ENCODE measurements at regions of chr19 and their contacts with region 1.

Region 1: GRCh38 chr19:40716655-40717324 is at the starts of genes COQ8B and ITPKC:
- DNase-seq: peak; percentile 100
- ATAC-seq: peak; percentile 79
- total RNA-seq, gene COQ8B: 37.4 TPM
- total RNA-seq, gene ITPKC: 12.6 TPM

Region 2: DNA sequence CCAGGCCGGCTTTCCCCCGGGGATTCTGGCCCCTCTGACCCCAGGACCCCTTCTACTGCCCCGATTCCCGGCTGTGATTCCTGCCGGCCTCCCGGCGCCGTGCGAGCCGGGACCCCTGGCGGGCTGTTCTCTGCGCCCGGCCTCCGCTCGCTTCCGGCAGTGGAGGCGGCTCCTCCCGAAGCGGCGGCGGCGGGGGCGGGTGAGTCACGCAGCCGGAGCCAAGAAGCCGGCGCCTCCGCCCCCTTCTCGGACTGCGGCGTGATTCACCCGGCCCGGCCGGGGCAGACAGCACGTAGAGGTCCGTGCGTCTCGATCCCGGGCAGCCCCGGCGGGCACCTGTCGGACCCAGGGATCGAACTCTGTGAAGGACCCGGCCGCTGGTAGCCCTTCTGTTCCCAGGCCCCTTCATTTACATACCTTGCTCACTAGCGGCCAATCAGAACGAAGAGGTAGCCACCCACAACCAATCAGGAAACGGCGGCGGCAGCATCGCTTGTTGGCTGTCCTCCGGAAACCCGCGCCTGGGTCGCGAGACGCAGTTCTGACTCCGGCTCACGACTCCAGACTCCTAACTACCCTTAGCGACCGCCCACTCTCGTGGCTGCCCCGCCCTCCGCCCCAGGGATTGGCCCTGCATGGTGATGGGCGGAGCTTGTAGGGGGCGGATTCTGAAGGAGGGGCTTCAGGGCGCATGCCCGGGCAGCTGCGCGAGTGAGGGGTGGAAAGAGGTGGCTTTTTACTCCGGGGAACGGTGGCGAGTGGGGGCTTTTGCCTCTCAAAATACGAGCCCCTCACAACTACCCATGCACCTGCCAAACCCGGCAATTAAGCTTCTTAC is 291.1 kb before region 1 on chr19 and contains the start of gene SERTAD1:
- intact Hi-C with region 1: loop called (anchors 10 kb)
- DNase-seq: peak; percentile 100
- ATAC-seq: peak; percentile 94
- total RNA-seq, gene SERTAD1: 12.0 TPM

Region 3: GRCh38 chr19:40603389-40604135 is 113.2 kb before region 1 on chr19:
- intact Hi-C with region 1: loop called (anchors 5 kb)
- DNase-seq: peak; percentile 98
- ATAC-seq: peak; percentile 82

Region 4: GRCh38 chr19:40662921-40663694 is 53.7 kb before region 1 on chr19:
- intact Hi-C with region 1: loop called (anchors 2 kb)
- DNase-seq: peak; percentile 95
- ATAC-seq: peak; percentile 88

Region 5: GRCh38 chr19:40690693-40691420 is 25.9 kb before region 1 on chr19:
- intact Hi-C with region 1: loop called (anchors 2 kb)
- DNase-seq: peak; percentile 98
- ATAC-seq: peak; percentile 92

Region 6: DNA sequence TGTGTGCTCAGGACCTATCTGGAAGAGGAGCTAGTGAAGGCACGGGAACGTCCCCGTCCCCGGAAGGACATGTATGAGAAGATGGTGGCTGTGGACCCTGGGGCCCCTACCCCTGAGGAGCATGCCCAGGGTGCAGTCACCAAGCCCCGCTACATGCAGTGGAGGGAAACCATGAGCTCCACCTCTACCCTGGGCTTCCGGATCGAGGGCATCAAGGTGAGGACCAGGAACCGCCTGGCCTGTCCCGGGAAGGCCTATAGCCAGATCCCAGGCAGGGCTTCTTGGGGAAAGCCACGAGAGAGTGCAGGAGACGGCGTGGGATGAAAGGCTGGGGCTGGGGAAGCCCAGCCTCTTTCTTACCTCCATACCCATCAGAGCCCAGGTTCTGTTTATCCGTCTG is 16.4 kb after region 1 on chr19:
- intact Hi-C with region 1: no loop called
- DNase-seq: peak; percentile 43
- ATAC-seq: no peak

Region 7: GRCh38 chr19:40750059-40750873 is 33.5 kb after region 1 on chr19 and contains the start of gene ACTMAP:
- intact Hi-C with region 1: loop called (anchors 2 kb)
- DNase-seq: peak; percentile 100
- ATAC-seq: peak; percentile 97
- total RNA-seq, gene ACTMAP: 6.4 TPM

Region 8: GRCh38 chr19:40762754-40763470 is 46.1 kb after region 1 on chr19:
- intact Hi-C with region 1: no loop called
- DNase-seq: no peak
- ATAC-seq: no peak

Region 9: DNA sequence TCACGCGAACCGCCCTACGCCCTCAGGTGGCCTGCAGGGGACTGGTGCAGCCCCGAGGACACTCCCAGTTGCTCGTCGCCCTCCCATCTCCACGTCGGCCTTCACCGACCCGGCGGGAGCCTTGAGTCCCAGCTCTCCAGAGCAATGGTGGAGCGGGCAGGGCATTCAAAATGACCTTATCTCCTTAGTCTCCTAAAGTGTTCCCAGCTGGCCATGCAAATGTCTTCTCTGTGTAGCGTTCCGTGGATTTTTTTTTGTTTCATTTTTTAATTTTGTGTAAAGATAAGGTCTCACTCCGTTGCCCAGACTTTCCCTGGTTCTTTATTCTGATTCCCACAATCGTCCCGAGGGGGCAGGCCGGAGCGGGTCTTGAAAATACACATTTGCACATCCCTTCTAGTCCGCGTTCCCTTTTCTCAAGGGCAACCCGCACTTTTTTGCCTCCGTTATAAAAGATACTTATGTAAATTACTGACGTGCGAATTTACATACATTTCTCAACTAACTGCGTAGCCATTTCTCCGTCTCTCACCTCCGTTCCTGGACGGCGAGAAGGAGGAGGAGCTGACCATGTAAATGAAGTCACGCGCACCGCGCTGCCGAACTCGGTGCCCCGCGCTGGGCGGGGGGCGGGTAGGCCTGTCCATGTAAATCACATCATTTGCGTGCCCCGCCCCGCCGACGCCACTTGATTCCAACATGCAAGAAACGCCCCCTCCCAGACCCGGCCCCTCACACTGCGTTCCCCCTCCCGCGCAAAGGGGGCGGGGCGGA is 81.6 kb after region 1 on chr19:
- intact Hi-C with region 1: loop called (anchors 2 kb)
- DNase-seq: peak; percentile 100
- ATAC-seq: peak; percentile 91